Activated CD8-positive, alpha-beta T cell treated with anti-CD3 and anti-CD28 coated beads, Interleukin-2, amount 10 ng/mL, durations not matched to agents 7 days and 5 days (primary cell): ENCODE measurements at regions of chr3 and their contacts with region 1.

Region 1: DNA sequence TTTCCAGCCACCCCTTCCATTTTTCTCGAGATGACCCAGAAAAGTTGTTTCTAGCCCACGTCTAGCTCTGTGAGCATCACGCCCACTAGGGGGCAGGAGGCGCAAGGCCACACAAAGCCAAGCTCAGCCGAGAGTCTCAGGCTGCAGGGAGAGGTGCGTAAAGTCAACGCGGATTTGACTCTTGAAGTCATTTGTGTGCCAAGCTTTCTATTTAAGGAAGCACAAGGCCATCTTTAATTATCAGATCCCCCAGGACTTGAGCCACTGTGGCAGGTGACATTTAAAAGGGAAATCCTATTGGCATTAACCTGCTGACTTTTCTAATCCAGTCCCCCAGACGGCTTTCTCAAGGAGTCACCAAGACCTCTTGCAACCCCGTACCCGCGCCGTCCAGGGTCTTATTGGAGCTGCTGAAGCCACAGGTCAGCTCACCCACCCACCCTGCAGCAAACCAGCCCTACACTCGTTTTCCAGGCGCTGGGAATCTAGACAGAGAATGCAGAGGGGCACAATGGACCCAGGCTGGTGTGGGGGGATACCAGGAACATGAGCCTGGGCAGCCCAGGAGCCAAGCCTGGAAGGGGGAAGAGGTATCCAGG is 62.1 kb downstream of the CAPN7 start:
- DNase-seq: peak; percentile 89
- ATAC-seq: peak; percentile 67
- H3K4me3 Mint-ChIP-seq: no peak overlapping the region
- H3K27ac Mint-ChIP-seq: no peak overlapping the region
- H3K4me1 Mint-ChIP-seq: peaks cover 54% of the 10 kb centered on the region
- H3K27me3 Mint-ChIP-seq: peaks cover 2% of the 10 kb centered on the region

Region 2: GRCh38 chr3:15205934-15206661 is 62.0 kb before region 1 on chr3 and contains the start of gene CAPN7:
- CTCF ChIA-PET with region 1: interaction called, 100 read pairs
- POLR2A ChIA-PET with region 1: no interaction called
- DNase-seq: peak; percentile 94
- ATAC-seq: peak; percentile 94
- H3K4me3 Mint-ChIP-seq: peak within 1 kb of the TSS; percentile 83
- H3K27ac Mint-ChIP-seq: peak within 1 kb of the TSS; percentile 86
- H3K4me1 Mint-ChIP-seq: peaks cover 29% of the 10 kb centered on the region
- H3K27me3 Mint-ChIP-seq: no peaks in the 10 kb centered on the region
- total RNA-seq, gene CAPN7: 28.3 to 29.5 TPM

Region 3: DNA sequence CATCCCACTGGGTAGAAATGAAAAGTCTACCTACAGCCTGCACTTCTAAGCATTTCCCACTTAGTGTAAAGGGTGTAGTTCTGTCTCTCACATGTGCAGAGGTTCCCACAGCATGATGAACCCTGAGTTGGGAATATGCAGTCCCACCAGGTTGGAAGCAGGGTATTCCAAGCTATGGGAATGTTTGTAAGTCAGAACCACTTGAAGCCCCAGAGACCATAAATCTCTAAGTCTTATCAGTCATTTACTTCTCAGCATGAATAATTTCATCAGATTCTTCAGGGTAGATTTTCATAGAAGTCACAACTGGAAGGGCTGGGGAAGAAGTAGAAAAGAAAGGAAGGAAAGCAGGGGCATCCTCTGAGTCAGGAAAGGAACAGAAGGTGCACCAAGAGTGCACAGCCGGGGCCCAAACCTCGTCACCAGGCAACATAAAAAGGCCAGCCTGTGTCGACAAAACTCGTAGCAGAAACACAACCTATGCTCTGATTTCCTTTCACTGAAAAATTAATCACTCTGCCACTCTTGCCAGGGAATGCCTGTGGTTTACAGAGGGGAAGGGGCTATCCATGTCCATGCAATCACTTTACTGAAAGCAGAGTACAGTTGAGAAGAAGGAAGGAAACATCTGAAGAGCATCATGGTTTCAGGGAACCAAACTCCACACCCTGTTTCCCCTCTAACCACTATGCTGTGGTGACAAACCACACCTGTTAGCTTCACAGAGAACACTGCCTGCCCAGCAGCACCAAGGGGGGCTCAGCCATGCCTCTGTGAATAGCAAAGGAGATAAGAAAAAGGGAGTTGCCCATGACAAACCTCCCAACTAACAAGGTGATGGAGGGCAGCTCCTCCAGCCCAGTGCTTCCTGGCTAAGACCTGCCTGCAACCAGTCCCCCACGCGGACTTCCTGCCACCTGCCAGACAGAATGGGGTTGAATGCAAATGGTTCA is 23.7 kb after region 1 on chr3:
- CTCF ChIA-PET with region 1: interaction called, 27 read pairs
- POLR2A ChIA-PET with region 1: no interaction called
- DNase-seq: peak; percentile 88
- ATAC-seq: peak; percentile 97
- H3K4me3 Mint-ChIP-seq: peak overlapping the region; percentile 66
- H3K27ac Mint-ChIP-seq: peak overlapping the region; percentile 95
- H3K4me1 Mint-ChIP-seq: peaks cover 55% of the 10 kb centered on the region
- H3K27me3 Mint-ChIP-seq: peaks cover 23% of the 10 kb centered on the region

Region 4: GRCh38 chr3:15325242-15325641 is 57.1 kb after region 1 on chr3:
- CTCF ChIA-PET with region 1: interaction called, 168 read pairs
- POLR2A ChIA-PET with region 1: no interaction called
- DNase-seq: no peak
- ATAC-seq: no peak
- H3K4me3 Mint-ChIP-seq: no peak overlapping the region
- H3K27ac Mint-ChIP-seq: no peak overlapping the region
- H3K4me1 Mint-ChIP-seq: peaks cover 24% of the 10 kb centered on the region
- H3K27me3 Mint-ChIP-seq: peaks cover 4% of the 10 kb centered on the region

Region 5: DNA sequence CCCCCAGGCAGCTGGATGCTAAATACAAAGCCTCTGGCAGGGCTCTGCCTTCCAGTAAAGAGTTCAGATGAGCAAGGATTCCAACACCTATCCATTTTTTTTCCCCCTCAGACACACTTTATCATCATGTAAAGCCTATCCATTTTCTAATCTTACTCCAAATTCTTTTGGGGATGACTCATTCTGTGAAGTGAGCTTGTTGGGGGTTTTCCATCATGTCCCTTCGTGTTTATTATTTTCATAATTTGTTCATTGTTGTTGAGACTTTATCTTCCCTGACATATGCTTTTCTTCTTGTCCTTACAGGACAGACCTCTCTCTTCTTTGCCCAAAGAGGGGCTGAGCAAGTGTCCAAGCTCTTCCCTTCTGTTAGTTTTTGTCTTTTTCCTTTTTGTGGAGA is 98.9 kb after region 1 on chr3:
- CTCF ChIA-PET with region 1: interaction called, 16 read pairs
- POLR2A ChIA-PET with region 1: interaction called, 4 read pairs
- DNase-seq: no peak
- ATAC-seq: no peak
- H3K4me3 Mint-ChIP-seq: no peak overlapping the region
- H3K27ac Mint-ChIP-seq: no peak overlapping the region
- H3K4me1 Mint-ChIP-seq: peaks cover 18% of the 10 kb centered on the region
- H3K27me3 Mint-ChIP-seq: peaks cover 18% of the 10 kb centered on the region

Region 6: GRCh38 chr3:15384510-15385237 is 116.5 kb after region 1 on chr3:
- CTCF ChIA-PET with region 1: interaction called, 123 read pairs
- POLR2A ChIA-PET with region 1: no interaction called
- DNase-seq: no peak
- ATAC-seq: no peak
- H3K4me3 Mint-ChIP-seq: no peak overlapping the region
- H3K27ac Mint-ChIP-seq: no peak overlapping the region
- H3K4me1 Mint-ChIP-seq: peaks cover 6% of the 10 kb centered on the region
- H3K27me3 Mint-ChIP-seq: peaks cover 3% of the 10 kb centered on the region

Region 7: GRCh38 chr3:15557511-15557946 is 289.4 kb after region 1 on chr3:
- CTCF ChIA-PET with region 1: interaction called, 43 read pairs
- POLR2A ChIA-PET with region 1: no interaction called
- DNase-seq: peak; percentile 87
- ATAC-seq: peak; percentile 95
- H3K4me3 Mint-ChIP-seq: no peak overlapping the region
- H3K27ac Mint-ChIP-seq: peak overlapping the region; percentile 69
- H3K4me1 Mint-ChIP-seq: peaks cover 30% of the 10 kb centered on the region
- H3K27me3 Mint-ChIP-seq: no peaks in the 10 kb centered on the region